GM10248 (cell line): ENCODE measurements at regions of chr11 and their contacts with region 1.

Region 1: GRCh38 chr11:250740-251299 is 14.0 kb downstream of the PSMD13 start:
- DNase-seq: peak; percentile 60
- CTCF ChIP-seq: peak; percentile 63

Region 2: GRCh38 chr11:236774-237767 is 13.7 kb before region 1 on chr11 and contains the start of gene PSMD13:
- CTCF ChIA-PET with region 1: interaction called, 85 read pairs
- POLR2A ChIA-PET with region 1: no interaction called
- DNase-seq: peak; percentile 93
- CTCF ChIP-seq: no peak

Region 3: GRCh38 chr11:279966-280582 is 29.3 kb after region 1 on chr11:
- CTCF ChIA-PET with region 1: interaction called, 14 read pairs
- POLR2A ChIA-PET with region 1: no interaction called
- DNase-seq: no peak
- CTCF ChIP-seq: no peak

Region 4: GRCh38 chr11:304915-305843 is 54.4 kb after region 1 on chr11:
- CTCF ChIA-PET with region 1: interaction called, 14 read pairs
- POLR2A ChIA-PET with region 1: no interaction called
- DNase-seq: peak; percentile 73
- CTCF ChIP-seq: peak; percentile 69

Region 5: DNA sequence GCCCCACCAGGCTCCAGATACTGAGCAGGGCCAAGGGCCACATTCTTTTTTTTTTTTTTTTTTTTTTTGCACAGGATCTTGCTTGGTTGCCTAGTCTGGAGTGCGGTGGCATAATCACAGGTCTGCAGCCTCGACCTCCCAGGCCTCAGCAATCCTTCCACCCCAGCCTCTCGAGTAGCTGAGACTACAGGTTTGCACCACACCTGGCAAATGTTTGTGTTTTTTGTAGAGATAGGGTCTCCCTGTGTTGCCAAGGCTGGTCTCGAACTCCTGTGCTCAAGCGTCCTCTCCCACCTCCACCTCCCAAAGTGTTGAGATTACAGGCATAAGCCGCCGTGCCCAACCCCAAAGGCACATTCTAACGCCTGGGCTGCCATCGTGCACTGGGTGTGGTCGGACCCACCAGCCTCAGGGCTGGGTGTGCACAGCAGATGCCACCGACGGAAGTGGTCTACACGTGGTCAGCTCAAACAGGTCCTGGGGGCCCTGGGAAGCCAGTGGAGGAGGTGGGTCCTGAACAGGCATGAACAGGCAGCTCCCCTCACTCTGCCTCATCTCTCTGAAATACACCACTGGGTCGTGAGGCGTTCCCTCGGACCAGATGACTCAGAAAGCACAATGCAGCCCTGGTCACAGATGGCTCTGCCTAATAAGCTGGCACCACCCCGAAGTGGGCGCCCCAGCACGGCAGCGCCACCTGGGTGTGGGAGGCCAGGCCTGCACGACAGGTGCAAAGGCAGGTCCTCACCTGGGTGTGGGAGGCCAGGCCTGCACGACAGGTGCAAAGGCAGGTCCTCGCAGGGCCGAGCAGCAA is 113.3 kb after region 1 on chr11:
- CTCF ChIA-PET with region 1: interaction called, 64 read pairs
- POLR2A ChIA-PET with region 1: no interaction called
- DNase-seq: no peak
- CTCF ChIP-seq: peak; percentile 68

Region 6: DNA sequence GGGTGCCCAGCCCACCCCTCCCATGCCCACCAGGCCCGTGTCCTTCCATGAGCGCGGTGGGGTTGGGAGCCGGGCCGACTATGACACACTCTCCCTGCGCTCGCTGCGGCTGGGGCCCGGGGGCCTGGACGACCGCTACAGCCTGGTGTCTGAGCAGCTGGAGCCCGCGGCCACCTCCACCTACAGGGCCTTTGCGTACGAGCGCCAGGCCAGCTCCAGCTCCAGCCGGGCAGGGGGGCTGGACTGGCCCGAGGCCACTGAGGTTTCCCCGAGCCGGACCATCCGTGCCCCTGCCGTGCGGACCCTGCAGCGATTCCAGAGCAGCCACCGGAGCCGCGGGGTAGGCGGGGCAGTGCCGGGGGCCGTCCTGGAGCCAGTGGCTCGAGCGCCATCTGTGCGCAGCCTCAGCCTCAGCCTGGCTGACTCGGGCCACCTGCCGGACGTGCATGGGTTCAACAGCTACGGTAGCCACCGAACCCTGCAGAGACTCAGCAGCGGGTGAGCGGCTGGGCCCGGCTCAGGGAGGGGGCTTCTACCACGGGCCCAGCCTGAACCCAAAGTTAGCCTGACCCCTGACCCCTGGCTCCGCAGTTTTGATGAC is 146.2 kb after region 1 on chr11:
- CTCF ChIA-PET with region 1: interaction called, 14 read pairs
- POLR2A ChIA-PET with region 1: no interaction called
- DNase-seq: peak; percentile 91
- CTCF ChIP-seq: peak; percentile 70